Psoas muscle (tissue), 8 donors: ENCODE measurements at regions of chr9 and their contacts with region 1.

Region 1: GRCh38 chr9:2655411-2655901 is 33.9 kb downstream of the VLDLR start:
- DNase-seq: no peak
- ATAC-seq: peak; percentile 83 to 88 (median 84)
- H3K4me3 ChIP-seq: no peak overlapping the region
- H3K27ac ChIP-seq: peak overlapping the region; percentile 63
- H3K4me1 ChIP-seq: no peaks in the 10 kb centered on the region
- H3K27me3 ChIP-seq: no peaks in the 10 kb centered on the region
- CTCF ChIP-seq: no peak

Region 2: GRCh38 chr9:2597483-2597882 is 58.0 kb before region 1 on chr9:
- intact Hi-C with region 1: no loop called
- DNase-seq: no peak
- ATAC-seq: no peak
- H3K4me3 ChIP-seq: no peak overlapping the region
- H3K27ac ChIP-seq: no peak overlapping the region
- H3K4me1 ChIP-seq: no peaks in the 10 kb centered on the region
- H3K27me3 ChIP-seq: no peaks in the 10 kb centered on the region
- CTCF ChIP-seq: no peak

Region 3: GRCh38 chr9:2630158-2630557 is 25.3 kb before region 1 on chr9:
- intact Hi-C with region 1: no loop called
- DNase-seq: no peak
- ATAC-seq: peak; percentile 73 to 89 (median 83)
- H3K4me3 ChIP-seq: no peak overlapping the region
- H3K27ac ChIP-seq: peak overlapping the region; percentile 81
- H3K4me1 ChIP-seq: peaks cover 53% of the 10 kb centered on the region
- H3K27me3 ChIP-seq: no peaks in the 10 kb centered on the region
- CTCF ChIP-seq: no peak

Region 4: GRCh38 chr9:2697492-2697891 is 42.0 kb after region 1 on chr9:
- intact Hi-C with region 1: no loop called
- DNase-seq: no peak
- ATAC-seq: no peak
- H3K4me3 ChIP-seq: no peak overlapping the region
- H3K27ac ChIP-seq: no peak overlapping the region
- H3K4me1 ChIP-seq: peaks cover 10% of the 10 kb centered on the region
- H3K27me3 ChIP-seq: no peaks in the 10 kb centered on the region
- CTCF ChIP-seq: no peak

Region 5: GRCh38 chr9:2809691-2810433 is 154.4 kb after region 1 on chr9:
- intact Hi-C with region 1: loop called in 1 of 2 experiments (anchors 10 kb)
- DNase-seq: no peak
- ATAC-seq: peak in 1 of 4 donors; percentile 48
- H3K4me3 ChIP-seq: no peak overlapping the region
- H3K27ac ChIP-seq: no peak overlapping the region
- H3K4me1 ChIP-seq: no peaks in the 10 kb centered on the region
- H3K27me3 ChIP-seq: no peaks in the 10 kb centered on the region
- CTCF ChIP-seq: no peak